PC-3 (cell line): ENCODE measurements at regions of chr3 and their contacts with region 1.

Region 1: GRCh38 chr3:197466586-197467399 is 89.0 kb downstream of the BDH1 start:
- DNase-seq: peak; percentile 55
- ATAC-seq: peak; percentile 73
- H3K4me3 ChIP-seq: peak overlapping the region; percentile 25; the same call in 1 of the 2 replicates
- H3K27ac ChIP-seq: peak overlapping the region; percentile 14
- H3K4me1 ChIP-seq: peaks cover 18% of the 10 kb centered on the region
- H3K27me3 ChIP-seq: no peaks in the 10 kb centered on the region
- CTCF ChIP-seq: no peak

Region 2: GRCh38 chr3:196483161-196483560 is 983.6 kb before region 1 on chr3:
- CTCF ChIA-PET with region 1: no interaction called
- POLR2A ChIA-PET with region 1: no interaction called
- intact Hi-C with region 1: no loop called
- DNase-seq: peak; percentile 14
- ATAC-seq: no peak
- H3K4me3 ChIP-seq: no peak overlapping the region
- H3K27ac ChIP-seq: no peak overlapping the region
- H3K4me1 ChIP-seq: no peaks in the 10 kb centered on the region
- H3K27me3 ChIP-seq: no peaks in the 10 kb centered on the region
- CTCF ChIP-seq: no peak

Region 3: GRCh38 chr3:197445896-197446711 is 20.7 kb before region 1 on chr3:
- CTCF ChIA-PET with region 1: no interaction called
- POLR2A ChIA-PET with region 1: no interaction called
- intact Hi-C with region 1: no loop called
- DNase-seq: no peak
- ATAC-seq: no peak
- H3K4me3 ChIP-seq: no peak overlapping the region
- H3K27ac ChIP-seq: no peak overlapping the region
- H3K4me1 ChIP-seq: no peaks in the 10 kb centered on the region
- H3K27me3 ChIP-seq: no peaks in the 10 kb centered on the region
- CTCF ChIP-seq: no peak

Region 4: DNA sequence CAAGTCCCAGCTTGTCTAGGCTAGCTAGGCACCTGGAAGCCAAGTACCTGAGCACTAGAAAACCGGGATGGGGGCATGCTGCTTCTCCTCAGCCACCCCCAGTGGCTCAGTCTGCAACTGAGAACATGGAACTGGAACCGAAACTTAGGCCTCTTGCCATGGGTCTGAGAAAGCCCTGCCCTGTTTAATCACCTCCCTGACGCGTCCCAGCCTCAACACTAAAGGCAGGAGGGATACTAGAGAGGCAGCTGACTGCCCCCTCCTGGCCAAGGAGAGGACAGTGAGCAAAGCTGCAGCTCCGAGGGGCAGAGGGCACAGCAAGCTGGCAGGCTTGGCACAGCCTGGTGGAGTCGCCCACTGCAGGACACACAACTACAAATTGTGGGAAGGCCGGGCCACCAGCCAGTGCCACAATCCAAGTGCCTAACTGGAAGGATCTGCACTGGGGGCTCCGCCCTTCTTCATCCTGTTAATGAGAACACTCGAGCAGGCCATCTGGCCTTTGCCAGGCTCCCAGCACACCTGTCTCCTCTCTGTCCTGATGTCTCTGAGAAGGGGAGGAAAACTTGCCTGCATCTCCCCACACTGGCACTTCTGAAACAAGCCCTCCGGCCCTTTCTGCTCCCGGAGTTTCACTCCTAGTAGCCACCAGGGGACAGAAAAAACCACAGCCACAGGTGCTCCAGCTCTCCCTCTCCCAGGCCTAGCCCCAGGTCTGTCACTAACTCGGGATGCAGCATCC is 35.3 kb after region 1 on chr3:
- CTCF ChIA-PET with region 1: no interaction called
- POLR2A ChIA-PET with region 1: no interaction called
- intact Hi-C with region 1: loop called (anchors 5 kb)
- DNase-seq: peak; percentile 84
- ATAC-seq: peak; percentile 69
- H3K4me3 ChIP-seq: no peak overlapping the region
- H3K27ac ChIP-seq: peak overlapping the region; percentile 61
- H3K4me1 ChIP-seq: peaks cover 30% of the 10 kb centered on the region
- H3K27me3 ChIP-seq: no peaks in the 10 kb centered on the region
- CTCF ChIP-seq: peak; percentile 93

Region 5: DNA sequence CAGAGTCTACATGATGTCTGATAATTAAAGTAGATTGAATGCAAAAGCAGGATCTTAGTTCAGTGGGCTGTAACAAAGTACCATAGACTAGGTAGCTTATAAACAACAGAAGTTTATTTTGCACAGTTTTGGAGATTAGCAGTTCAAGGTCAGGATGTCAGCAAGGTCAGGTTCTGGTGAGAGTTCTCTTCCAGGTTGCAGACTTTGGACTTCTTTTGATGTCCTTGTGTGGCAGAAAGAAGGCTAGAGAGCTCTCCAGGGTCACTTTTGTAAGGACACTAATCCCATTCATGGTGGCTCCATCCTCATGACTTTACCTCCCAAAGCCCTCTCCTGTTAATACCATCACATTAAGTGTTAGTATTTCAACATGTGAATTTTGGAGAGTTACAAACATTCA is 295.0 kb after region 1 on chr3:
- CTCF ChIA-PET with region 1: no interaction called
- POLR2A ChIA-PET with region 1: no interaction called
- intact Hi-C with region 1: no loop called
- DNase-seq: no peak
- ATAC-seq: no peak
- H3K4me3 ChIP-seq: no peak overlapping the region
- H3K27ac ChIP-seq: no peak overlapping the region
- H3K4me1 ChIP-seq: no peaks in the 10 kb centered on the region
- H3K27me3 ChIP-seq: no peaks in the 10 kb centered on the region
- CTCF ChIP-seq: no peak

Region 6: GRCh38 chr3:197801891-197802778 is 335.3 kb after region 1 on chr3:
- CTCF ChIA-PET with region 1: no interaction called
- POLR2A ChIA-PET with region 1: no interaction called
- intact Hi-C with region 1: no loop called
- DNase-seq: peak; percentile 59
- ATAC-seq: peak; percentile 61
- H3K4me3 ChIP-seq: no peak overlapping the region
- H3K27ac ChIP-seq: peak overlapping the region; percentile 52
- H3K4me1 ChIP-seq: peaks cover 21% of the 10 kb centered on the region
- H3K27me3 ChIP-seq: no peaks in the 10 kb centered on the region
- CTCF ChIP-seq: peak; percentile 65